ENCODE measurements at regions of chr6 and their contacts with region 1.

Region 1: DNA sequence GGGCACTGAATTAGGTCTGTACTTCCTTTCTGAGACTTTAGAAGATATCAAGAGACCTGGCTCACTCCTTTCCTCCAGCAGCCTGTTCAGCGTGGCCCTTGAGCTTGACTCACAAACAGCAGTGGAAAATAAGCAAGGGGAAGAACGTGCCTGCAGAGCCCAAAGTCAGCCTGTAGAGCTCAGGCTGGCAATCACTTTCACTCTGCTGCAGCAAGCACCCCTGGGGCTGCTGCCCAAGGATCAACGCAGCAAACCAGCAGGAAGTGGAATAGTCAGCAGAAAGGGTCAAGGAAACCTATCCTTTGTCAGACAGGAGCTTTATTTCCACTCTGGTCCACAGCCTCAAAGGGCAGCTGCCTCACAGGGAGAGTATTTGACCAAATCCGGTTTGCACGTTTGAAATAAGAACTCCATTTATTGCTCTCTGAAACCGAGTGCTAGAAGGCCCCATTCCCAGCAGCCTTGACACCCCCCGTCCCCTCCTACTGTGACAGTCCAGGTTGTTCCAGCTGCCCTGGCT is 77.4 kb downstream of the PRDM1 start:
- DNase-seq: peak; percentile 80
- ATAC-seq: peak; percentile 59
- H3K4me3 Mint-ChIP-seq: peak overlapping the region; percentile 61
- H3K27ac Mint-ChIP-seq: peak overlapping the region; percentile 89
- H3K4me1 Mint-ChIP-seq: peaks cover 49% of the 10 kb centered on the region
- H3K27me3 Mint-ChIP-seq: peaks cover 2% of the 10 kb centered on the region

Region 2: DNA sequence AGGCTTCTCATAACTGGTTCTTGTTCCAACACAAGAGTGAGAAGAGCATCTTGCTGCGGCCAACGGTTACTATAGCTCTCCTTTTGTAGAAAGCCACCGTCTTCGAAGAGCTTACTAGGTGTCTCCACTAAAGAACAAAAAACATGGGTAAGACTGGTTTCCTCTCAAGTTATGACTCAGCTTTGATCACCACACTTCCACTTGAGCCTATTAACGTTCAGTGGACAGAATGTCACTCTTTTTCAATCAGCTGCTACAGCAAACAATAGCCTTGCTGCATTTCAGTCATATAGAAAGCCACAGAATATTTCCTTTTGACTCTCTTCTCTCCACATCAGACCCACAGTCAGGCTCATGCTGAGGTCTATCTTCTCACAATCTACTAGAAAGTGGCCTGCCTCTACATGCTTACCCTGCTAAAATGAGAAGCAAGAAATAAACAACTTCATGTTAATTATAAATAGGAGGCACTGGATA is 517.1 kb before region 1 on chr6:
- CTCF ChIA-PET with region 1: no interaction called
- POLR2A ChIA-PET with region 1: no interaction called
- intact Hi-C with region 1: loop called in 1 of 2 experiments (anchors 1 kb)
- DNase-seq: peak; percentile 53
- ATAC-seq: peak; percentile 90
- H3K4me3 Mint-ChIP-seq: no peak overlapping the region
- H3K27ac Mint-ChIP-seq: no peak overlapping the region
- H3K4me1 Mint-ChIP-seq: peaks cover 62% of the 10 kb centered on the region
- H3K27me3 Mint-ChIP-seq: peaks cover 44% of the 10 kb centered on the region

Region 3: DNA sequence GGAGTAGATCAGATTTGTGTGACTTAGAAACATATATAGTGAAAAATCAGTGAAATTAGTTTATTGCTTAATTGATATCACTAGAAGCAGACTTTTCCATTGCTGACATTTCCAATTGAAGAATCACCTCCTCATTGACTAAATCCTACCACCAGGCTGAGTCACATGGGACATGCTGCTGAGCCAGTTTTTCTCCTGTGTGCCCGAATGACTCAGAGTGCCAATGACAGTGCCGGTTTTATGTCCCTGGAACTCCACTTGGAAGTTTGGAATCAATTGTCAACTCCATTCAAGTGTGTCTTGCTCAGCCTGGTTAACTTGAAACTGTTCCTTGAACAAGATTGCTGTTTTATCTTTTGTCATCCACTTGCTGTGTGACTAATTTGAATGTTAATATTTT is 393.5 kb before region 1 on chr6:
- CTCF ChIA-PET with region 1: no interaction called
- POLR2A ChIA-PET with region 1: no interaction called
- intact Hi-C with region 1: no loop called
- DNase-seq: no peak
- ATAC-seq: no peak
- H3K4me3 Mint-ChIP-seq: no peak overlapping the region
- H3K27ac Mint-ChIP-seq: no peak overlapping the region
- H3K4me1 Mint-ChIP-seq: no peaks in the 10 kb centered on the region
- H3K27me3 Mint-ChIP-seq: peaks cover 2% of the 10 kb centered on the region

Region 4: DNA sequence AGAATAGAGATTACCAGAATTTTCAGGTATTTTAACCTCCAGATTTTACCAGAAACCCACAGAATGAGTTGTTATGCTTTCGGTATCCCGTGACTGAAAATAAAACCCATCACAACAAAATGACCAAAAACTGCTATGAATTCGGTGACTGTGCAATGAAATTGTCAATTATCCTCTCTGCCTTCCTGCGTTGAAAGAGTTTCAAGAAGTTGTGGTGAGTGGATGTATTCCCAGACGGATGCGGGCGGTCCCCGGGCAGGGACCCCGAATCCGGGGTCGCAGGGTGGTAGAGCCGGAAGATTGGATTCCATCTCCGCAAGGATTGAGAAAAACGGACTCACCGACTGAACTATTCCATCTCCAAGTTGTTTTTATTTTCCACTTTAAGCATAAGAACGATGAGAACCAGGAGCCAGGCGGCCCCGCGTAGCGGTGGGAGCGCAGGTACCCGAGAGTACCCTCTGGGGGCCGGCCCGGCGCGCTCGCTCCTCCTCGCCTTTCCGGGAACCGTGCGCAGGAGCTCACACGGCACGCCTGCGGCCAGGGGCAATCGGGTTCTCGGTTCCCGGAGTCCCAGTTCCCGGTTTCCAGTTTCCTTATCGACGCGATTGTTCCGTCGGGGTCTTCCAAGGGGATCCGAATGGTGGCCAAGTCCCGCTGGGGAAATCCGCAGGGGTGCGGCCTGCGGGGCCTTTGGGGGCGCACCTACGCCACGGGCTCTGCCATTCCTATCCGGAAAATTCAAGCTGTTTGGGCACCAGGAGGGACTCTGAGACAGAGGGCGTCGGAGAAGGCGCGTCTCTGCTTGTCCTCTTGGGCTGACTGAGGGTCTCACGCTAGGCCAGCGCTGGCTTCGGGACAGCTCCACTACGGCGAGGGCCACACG is 182.3 kb before region 1 on chr6:
- CTCF ChIA-PET with region 1: no interaction called
- POLR2A ChIA-PET with region 1: no interaction called
- intact Hi-C with region 1: loop called in 1 of 2 experiments (anchors 1 kb)
- DNase-seq: peak; percentile 66
- ATAC-seq: peak; percentile 67
- H3K4me3 Mint-ChIP-seq: peak overlapping the region; percentile 71
- H3K27ac Mint-ChIP-seq: peak overlapping the region; percentile 79
- H3K4me1 Mint-ChIP-seq: peaks cover 37% of the 10 kb centered on the region
- H3K27me3 Mint-ChIP-seq: peaks cover 50% of the 10 kb centered on the region

Region 5: GRCh38 chr6:106103728-106104109 is 59.8 kb before region 1 on chr6:
- CTCF ChIA-PET with region 1: interaction called, 4 read pairs
- POLR2A ChIA-PET with region 1: interaction called, 12 read pairs
- intact Hi-C with region 1: loop called (anchors 1 kb)
- DNase-seq: peak; percentile 65
- ATAC-seq: peak; percentile 47
- H3K4me3 Mint-ChIP-seq: peak overlapping the region; percentile 82
- H3K27ac Mint-ChIP-seq: peak overlapping the region; percentile 62
- H3K4me1 Mint-ChIP-seq: peaks cover 77% of the 10 kb centered on the region
- H3K27me3 Mint-ChIP-seq: peaks cover 16% of the 10 kb centered on the region

Region 6: DNA sequence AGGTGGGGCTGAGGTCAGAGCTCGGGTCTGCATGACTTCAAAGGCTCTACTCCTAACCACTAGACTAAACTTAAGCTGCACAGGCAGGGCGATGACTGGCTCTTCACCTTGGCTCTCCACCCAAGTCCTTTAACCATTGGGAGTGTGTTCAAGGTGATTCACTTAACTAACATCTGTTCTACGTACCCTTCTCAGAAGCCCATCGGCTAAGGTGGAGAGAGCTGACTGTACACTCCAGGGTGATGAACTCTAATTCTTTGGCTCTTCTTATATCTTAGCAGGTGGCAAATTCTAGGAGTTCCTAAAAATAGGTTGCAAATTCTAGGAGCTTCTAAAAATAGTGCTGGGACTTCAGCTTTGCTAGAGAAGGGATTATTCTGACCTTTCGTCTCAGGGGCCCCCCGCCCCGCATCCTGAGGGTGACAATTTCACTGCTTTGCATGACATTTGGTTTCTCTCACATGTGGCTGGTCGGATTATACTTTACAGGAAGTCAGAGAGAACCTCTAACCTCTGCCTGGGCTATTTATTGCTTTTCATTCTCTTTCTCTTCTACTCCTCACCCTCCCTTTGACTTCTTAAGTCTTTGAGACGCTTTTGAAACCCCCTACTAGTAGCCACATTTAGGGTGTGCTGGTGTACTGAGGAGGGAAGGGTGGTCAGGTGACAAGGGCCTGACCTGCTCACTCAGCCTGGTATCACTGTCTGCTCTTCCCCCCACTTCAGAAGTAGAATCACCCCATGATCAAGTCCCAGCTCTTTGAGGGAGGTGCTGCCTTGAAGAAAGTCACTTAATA is 21.9 kb before region 1 on chr6:
- CTCF ChIA-PET with region 1: interaction called, 12 read pairs
- POLR2A ChIA-PET with region 1: interaction called, 11 read pairs
- intact Hi-C with region 1: loop called (anchors 1 to 2 kb)
- DNase-seq: peak; percentile 76
- ATAC-seq: peak; percentile 93
- H3K4me3 Mint-ChIP-seq: peak overlapping the region; percentile 26
- H3K27ac Mint-ChIP-seq: peak overlapping the region; percentile 85
- H3K4me1 Mint-ChIP-seq: peaks cover 48% of the 10 kb centered on the region
- H3K27me3 Mint-ChIP-seq: peaks cover 2% of the 10 kb centered on the region

Region 7: DNA sequence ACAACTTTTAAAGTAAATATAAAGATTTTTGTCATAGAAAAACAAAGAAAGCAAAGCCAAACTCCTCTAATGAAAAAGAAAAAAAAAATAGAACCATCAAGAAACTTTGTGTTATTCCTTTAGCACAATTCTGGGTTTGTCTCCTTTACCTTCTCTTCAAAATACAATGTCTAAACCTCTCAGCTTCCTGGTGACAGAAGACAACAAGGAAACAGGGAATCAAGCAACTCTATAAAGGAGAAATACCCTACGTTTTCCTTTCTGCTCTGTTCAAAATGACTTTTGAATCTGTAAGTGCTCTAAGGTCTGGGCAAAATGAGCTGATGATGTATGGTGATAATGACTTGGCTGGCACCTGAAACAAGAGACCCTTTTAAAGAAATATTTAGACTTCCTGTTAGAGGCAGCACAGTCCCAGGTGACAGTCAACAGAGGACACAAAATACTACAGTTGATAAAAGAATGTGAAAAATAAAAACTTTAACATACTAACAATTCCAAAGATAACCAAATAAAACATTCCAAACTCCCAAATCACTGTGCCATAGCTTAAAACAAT is 24.0 kb after region 1 on chr6:
- CTCF ChIA-PET with region 1: interaction called, 8 read pairs
- POLR2A ChIA-PET with region 1: interaction called, 9 read pairs
- intact Hi-C with region 1: loop called (anchors 1 kb)
- DNase-seq: no peak
- ATAC-seq: no peak
- H3K4me3 Mint-ChIP-seq: no peak overlapping the region
- H3K27ac Mint-ChIP-seq: peak overlapping the region; percentile 55
- H3K4me1 Mint-ChIP-seq: peaks cover 56% of the 10 kb centered on the region
- H3K27me3 Mint-ChIP-seq: no peaks in the 10 kb centered on the region

Measured in activated CD4-positive, alpha-beta T cell treated with anti-CD3 and anti-CD28 coated beads for 36 hours (primary cell).